IMR-90 (cell line): ENCODE measurements at regions of chr4 and their contacts with region 1.

Region 1: DNA sequence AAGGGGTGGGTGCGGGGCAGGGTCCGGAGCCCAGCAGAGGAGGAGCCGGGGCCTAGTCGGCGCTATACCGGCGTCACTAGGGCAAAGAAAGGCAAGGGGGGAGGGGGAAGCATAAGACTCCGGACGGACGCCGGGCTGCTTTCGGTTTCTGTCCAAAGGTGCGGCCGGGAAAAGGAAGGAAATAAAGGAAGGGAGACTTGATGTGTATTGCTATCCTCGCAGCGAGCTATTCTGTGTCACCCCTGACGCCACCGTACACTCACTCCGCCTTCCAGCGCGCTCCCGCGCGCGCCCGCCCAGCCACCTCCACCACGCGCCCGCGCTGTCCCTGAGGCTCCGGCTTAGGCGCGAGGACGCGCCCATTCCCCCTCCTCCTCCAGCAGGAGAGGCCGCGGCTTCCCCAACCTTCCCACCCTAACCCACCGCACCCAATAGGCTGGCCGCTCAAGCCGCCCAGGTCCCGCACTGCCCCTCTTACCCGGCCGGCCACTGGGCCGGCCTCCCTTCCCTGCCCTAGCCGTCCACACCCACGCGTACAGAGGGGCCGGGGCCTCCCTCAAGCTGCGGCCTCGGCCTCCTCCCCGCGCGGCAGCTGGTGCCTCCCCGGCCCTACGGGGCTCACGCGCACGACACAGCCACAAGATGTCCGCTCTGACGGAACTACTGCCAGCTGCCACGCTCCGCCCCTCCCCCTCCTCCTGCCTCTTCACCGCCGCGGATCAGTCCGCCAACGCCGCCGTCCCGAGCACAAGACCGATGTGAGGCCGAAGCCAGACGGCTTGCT is at the start of gene UBE2D3:
- DNase-seq: peak; percentile 97
- ATAC-seq: peak; percentile 60
- H3K4me3 ChIP-seq: peak within 1 kb of the TSS; percentile 69
- H3K27ac ChIP-seq: peak within 1 kb of the TSS; percentile 97
- H3K4me1 ChIP-seq: peaks cover 4% of the 10 kb centered on the region; the same call in 1 of the 2 replicates
- H3K27me3 ChIP-seq: no peaks in the 10 kb centered on the region
- CTCF ChIP-seq: peak; percentile 14; the same call in 1 of the 2 replicates
- POLR2A ChIP-seq: peak; percentile 89
- RAD21 ChIP-seq: 0 out of 2 replicates have a peak, but pooled peaks have one; percentile 4
- total RNA-seq, gene UBE2D3: 387 and 407 TPM in 2 replicates

Region 2: DNA sequence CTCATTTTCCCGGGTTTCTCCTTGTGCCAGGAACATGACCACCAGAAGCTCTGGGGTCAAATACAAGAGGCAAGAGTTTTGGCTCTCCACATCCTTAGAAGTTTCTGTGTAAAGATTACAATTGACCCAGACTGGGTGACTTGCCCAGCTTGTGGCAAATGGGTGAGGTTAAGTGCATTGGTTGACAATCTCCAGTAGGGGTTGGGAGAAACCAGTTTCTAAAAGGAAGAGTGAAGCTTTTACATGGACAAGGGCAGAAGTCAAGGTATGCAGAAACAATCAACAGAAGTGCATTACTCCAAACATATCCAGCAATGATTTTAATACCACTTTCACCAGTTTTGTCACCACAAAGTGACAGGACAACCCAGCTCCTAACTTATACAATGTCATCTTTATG is 571.6 kb before region 1 on chr4:
- CTCF ChIA-PET with region 1: no interaction called
- POLR2A ChIA-PET with region 1: no interaction called
- dilution Hi-C with region 1: no loop called
- in situ Hi-C with region 1: no loop called
- intact Hi-C with region 1: no loop called
- DNase-seq: no peak
- ATAC-seq: no peak
- H3K4me3 ChIP-seq: no peak overlapping the region
- H3K27ac ChIP-seq: no peak overlapping the region
- H3K4me1 ChIP-seq: no peaks in the 10 kb centered on the region
- H3K27me3 ChIP-seq: no peaks in the 10 kb centered on the region
- CTCF ChIP-seq: no peak
- POLR2A ChIP-seq: no peak
- RAD21 ChIP-seq: no peak

Region 3: DNA sequence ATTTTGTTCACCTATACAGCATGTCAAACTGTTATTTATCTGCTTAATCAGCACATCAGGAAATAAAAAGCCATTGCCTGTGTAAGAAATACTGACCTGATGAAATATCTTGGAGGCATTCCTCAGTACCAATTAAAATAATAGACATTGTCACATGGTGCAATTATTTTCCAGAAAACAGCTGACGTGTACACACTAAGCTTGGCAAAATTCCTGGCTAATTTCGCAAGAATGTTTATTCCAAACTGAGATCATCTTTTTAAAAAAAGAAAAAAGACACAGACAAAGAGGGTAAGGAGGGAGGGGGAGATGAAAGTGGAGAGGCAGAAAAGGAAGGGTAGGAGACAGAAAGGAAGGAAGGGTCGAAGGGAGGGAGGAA is 387.9 kb before region 1 on chr4:
- CTCF ChIA-PET with region 1: no interaction called
- POLR2A ChIA-PET with region 1: no interaction called
- dilution Hi-C with region 1: no loop called
- in situ Hi-C with region 1: no loop called
- intact Hi-C with region 1: loop called (anchors 5 kb)
- DNase-seq: peak; percentile 93
- ATAC-seq: peak; percentile 78
- H3K4me3 ChIP-seq: no peak overlapping the region
- H3K27ac ChIP-seq: peak overlapping the region; percentile 70; the same call in 1 of the 2 replicates
- H3K4me1 ChIP-seq: peaks cover 4% of the 10 kb centered on the region
- H3K27me3 ChIP-seq: no peaks in the 10 kb centered on the region
- CTCF ChIP-seq: no peak
- POLR2A ChIP-seq: no peak
- RAD21 ChIP-seq: no peak

Region 4: DNA sequence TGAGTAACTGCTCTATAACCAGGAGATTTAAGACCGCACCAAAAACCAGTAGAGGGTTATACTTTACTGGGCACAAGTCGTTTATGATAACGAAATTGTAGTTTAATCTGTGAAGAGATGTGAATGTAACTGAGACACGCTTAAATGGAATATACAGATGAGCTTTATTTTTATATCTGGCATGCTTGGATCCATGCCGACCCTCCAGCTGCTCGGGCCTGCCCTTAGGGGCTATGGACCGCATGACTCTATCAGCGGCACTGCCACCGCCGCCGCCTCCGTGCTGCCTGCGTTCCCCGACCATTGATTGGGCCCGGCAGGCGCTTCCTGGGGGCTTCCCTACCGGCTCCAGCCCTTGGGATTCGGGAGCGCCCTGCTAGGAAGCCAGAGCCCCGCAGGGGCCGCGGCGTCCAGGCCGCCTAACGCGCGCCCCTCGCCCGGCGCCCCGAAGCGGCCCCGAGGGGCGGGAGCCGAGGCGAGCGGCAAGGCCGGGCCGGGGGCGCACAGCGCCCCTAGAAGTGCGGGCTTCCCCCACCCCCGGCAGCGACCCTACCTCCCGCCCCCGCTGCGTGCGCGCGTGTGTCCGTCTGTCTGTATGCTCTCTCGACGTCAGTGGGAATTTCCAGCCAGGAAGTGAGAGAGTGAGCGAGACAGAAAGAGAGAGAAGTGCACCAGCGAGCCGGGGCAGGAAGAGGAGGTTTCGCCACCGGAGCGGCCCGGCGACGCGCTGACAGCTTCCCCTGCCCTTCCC is 326.2 kb before region 1 on chr4 and contains the start of gene NFKB1:
- CTCF ChIA-PET with region 1: no interaction called
- POLR2A ChIA-PET with region 1: no interaction called
- dilution Hi-C with region 1: no loop called
- in situ Hi-C with region 1: no loop called
- intact Hi-C with region 1: loop called (anchors 5 kb)
- DNase-seq: peak; percentile 89
- ATAC-seq: peak; percentile 67
- H3K4me3 ChIP-seq: peak within 1 kb of the TSS; percentile 70
- H3K27ac ChIP-seq: peak within 1 kb of the TSS; percentile 86
- H3K4me1 ChIP-seq: peaks cover 3% of the 10 kb centered on the region; the same call in 1 of the 2 replicates
- H3K27me3 ChIP-seq: no peaks in the 10 kb centered on the region
- CTCF ChIP-seq: no peak
- POLR2A ChIP-seq: peak; percentile 72; the same call in 1 of the 2 replicates
- RAD21 ChIP-seq: no peak
- total RNA-seq, gene NFKB1: 23.6 and 24.6 TPM in 2 replicates

Region 5: DNA sequence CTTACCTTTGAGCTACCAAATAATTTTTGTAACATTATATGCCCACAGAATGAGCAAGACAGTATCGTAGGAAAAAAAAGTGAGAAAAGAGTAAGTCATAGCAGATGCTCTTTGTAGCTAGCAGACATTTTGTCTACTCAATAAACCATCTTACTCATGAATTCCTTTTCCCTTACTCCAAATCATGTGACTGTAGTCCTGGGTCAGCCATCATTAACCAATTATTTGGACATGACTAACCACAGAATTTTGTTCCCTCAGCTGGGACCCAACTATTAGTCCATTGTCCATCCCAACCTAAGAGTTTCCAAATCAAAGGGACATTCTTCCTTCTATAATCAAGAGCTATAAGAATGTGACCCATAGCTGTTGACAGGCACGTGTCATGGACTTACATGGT is 11.1 kb before region 1 on chr4:
- CTCF ChIA-PET with region 1: no interaction called
- POLR2A ChIA-PET with region 1: interaction called, 5 read pairs
- dilution Hi-C with region 1: no loop called
- in situ Hi-C with region 1: no loop called
- intact Hi-C with region 1: loop called (anchors 1 kb)
- DNase-seq: peak; percentile 95
- ATAC-seq: peak; percentile 84
- H3K4me3 ChIP-seq: no peak overlapping the region
- H3K27ac ChIP-seq: peak overlapping the region; percentile 31; the same call in 1 of the 2 replicates
- H3K4me1 ChIP-seq: peaks cover 6% of the 10 kb centered on the region; the same call in 1 of the 2 replicates
- H3K27me3 ChIP-seq: no peaks in the 10 kb centered on the region
- CTCF ChIP-seq: no peak
- POLR2A ChIP-seq: no peak
- RAD21 ChIP-seq: no peak

Region 6: GRCh38 chr4:102858828-102859464 is 31.9 kb after region 1 on chr4:
- CTCF ChIA-PET with region 1: no interaction called
- POLR2A ChIA-PET with region 1: no interaction called
- dilution Hi-C with region 1: no loop called
- in situ Hi-C with region 1: no loop called
- intact Hi-C with region 1: no loop called
- DNase-seq: no peak
- ATAC-seq: no peak
- H3K4me3 ChIP-seq: no peak overlapping the region
- H3K27ac ChIP-seq: no peak overlapping the region
- H3K4me1 ChIP-seq: no peaks in the 10 kb centered on the region
- H3K27me3 ChIP-seq: no peaks in the 10 kb centered on the region
- CTCF ChIP-seq: no peak
- POLR2A ChIP-seq: no peak
- RAD21 ChIP-seq: no peak

Region 7: DNA sequence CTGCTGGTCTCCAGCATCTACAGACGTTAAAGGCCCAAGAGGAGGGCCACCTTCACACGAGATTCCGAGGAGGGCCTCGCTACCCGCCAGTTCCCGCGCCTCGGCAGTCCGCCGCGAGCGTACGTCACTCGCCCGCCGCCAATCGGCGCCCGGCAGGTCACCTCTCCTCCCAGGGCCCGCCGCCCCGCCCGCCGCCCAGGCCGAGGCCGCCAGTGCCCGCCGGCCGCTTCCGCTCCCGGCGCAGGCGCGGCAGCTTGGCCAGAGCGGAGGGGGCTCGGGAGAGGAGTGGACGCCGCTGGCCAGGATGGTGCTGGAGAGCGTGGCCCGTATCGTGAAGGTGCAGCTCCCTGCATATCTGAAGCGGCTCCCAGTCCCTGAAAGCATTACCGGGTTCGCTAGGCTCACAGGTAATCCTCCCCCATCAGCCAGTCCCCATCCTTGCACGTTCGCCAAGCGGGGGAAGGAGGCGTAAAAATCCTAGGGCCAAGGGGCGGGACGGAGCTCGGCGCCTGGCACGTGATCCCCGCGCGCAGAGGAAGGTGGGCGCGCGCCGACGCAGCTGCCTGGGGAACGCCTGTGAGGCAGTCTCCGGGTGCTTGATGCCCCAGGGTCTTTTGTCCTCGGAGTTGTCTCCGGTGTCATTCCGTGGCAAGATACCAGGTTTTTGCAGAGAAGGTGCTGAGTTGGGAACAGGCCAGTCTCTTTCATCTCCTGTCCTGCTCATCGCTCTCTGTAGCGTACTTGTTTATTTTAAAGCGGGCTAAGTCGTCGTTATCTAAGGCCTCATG is 41.9 kb after region 1 on chr4 and contains the start of gene CISD2:
- CTCF ChIA-PET with region 1: no interaction called
- POLR2A ChIA-PET with region 1: interaction called, 6 read pairs
- dilution Hi-C with region 1: no loop called
- in situ Hi-C with region 1: no loop called
- intact Hi-C with region 1: loop called (anchors 1 kb)
- DNase-seq: peak; percentile 85
- ATAC-seq: peak; percentile 98
- H3K4me3 ChIP-seq: peak within 1 kb of the TSS; percentile 81
- H3K27ac ChIP-seq: peak within 1 kb of the TSS; percentile 96
- H3K4me1 ChIP-seq: no peaks in the 10 kb centered on the region
- H3K27me3 ChIP-seq: no peaks in the 10 kb centered on the region
- CTCF ChIP-seq: no peak
- POLR2A ChIP-seq: peak; percentile 83
- RAD21 ChIP-seq: no peak
- total RNA-seq, gene CISD2: 7.0 and 21.1 TPM in 2 replicates

Region 8: GRCh38 chr4:103099691-103100392 is 272.8 kb after region 1 on chr4 and contains the start of gene BDH2:
- CTCF ChIA-PET with region 1: no interaction called
- POLR2A ChIA-PET with region 1: no interaction called
- dilution Hi-C with region 1: no loop called
- in situ Hi-C with region 1: no loop called
- intact Hi-C with region 1: loop called (anchors 1 kb)
- DNase-seq: peak; percentile 97
- ATAC-seq: peak; percentile 90
- H3K4me3 ChIP-seq: peak within 1 kb of the TSS; percentile 50
- H3K27ac ChIP-seq: peak within 1 kb of the TSS; percentile 96
- H3K4me1 ChIP-seq: peaks cover 7% of the 10 kb centered on the region
- H3K27me3 ChIP-seq: no peaks in the 10 kb centered on the region
- CTCF ChIP-seq: peak; percentile 85
- POLR2A ChIP-seq: no peak
- RAD21 ChIP-seq: peak; percentile 79
- total RNA-seq, gene BDH2: 36.4 and 52.2 TPM in 2 replicates